ENCODE measurements at regions of chr6 and their contacts with region 1.

Region 1: GRCh38 chr6:28252009-28252975 is at the start of gene ZKSCAN4:
- DNase-seq: peak; percentile 57 to 67
- ATAC-seq: peak; percentile 99 to 100
- H3K4me3 ChIP-seq: peak within 1 kb of the TSS; percentile 72 to 94 (median 90)
- H3K27ac ChIP-seq: peak within 1 kb of the TSS; percentile 44 to 53 (median 49)
- H3K4me1 ChIP-seq: peaks cover 9 to 15% of the 10 kb centered on the region in 2 donors
- H3K27me3 ChIP-seq: peaks cover 0 to 3% (median 0%) of the 10 kb centered on the region in 3 donors
- CTCF ChIP-seq: no peak
- POLR2A ChIP-seq: no peak
- total RNA-seq, gene ZKSCAN4: 0.82 to 3.3 (median 1.1) TPM

Region 2: GRCh38 chr6:28225056-28225834 is 27.0 kb before region 1 on chr6 and contains the start of gene ZSCAN9:
- in situ Hi-C with region 1: no loop called
- intact Hi-C with region 1: loop called (anchors 2 kb)
- DNase-seq: peak; percentile 75 to 83
- ATAC-seq: peak; percentile 93 to 99
- H3K4me3 ChIP-seq: peak within 1 kb of the TSS; percentile 66 to 88 (median 86)
- H3K27ac ChIP-seq: peak within 1 kb of the TSS; percentile 63 to 80 (median 71)
- H3K4me1 ChIP-seq: peaks cover 13 to 16% of the 10 kb centered on the region in 2 donors
- H3K27me3 ChIP-seq: peaks cover 0 to 12% (median 6%) of the 10 kb centered on the region in 3 donors
- CTCF ChIP-seq: no peak
- POLR2A ChIP-seq: no peak
- total RNA-seq, gene ZSCAN9: 3.7 to 6.5 (median 4.3) TPM

Region 3: GRCh38 chr6:28335564-28336283 is 83.4 kb after region 1 on chr6 and contains the start of gene ZSCAN31:
- in situ Hi-C with region 1: no loop called
- intact Hi-C with region 1: loop called (anchors 5 kb)
- DNase-seq: peak; percentile 90 to 94
- ATAC-seq: peak; percentile 98 to 99
- H3K4me3 ChIP-seq: peak within 1 kb of the TSS; percentile 78 to 91 (median 84)
- H3K27ac ChIP-seq: peak within 1 kb of the TSS; percentile 90 to 99 (median 97)
- H3K4me1 ChIP-seq: peaks cover 11 to 13% of the 10 kb centered on the region in 2 donors
- H3K27me3 ChIP-seq: no peaks in the 10 kb centered on the region
- CTCF ChIP-seq: no peak
- POLR2A ChIP-seq: peak; percentile 64 to 78
- total RNA-seq, gene ZSCAN31: 2.4 to 14.1 (median 7.5) TPM

Region 4: GRCh38 chr6:28443112-28443773 is 191.0 kb after region 1 on chr6 and contains the start of gene ZSCAN23:
- in situ Hi-C with region 1: no loop called
- intact Hi-C with region 1: loop called (anchors 2 kb)
- DNase-seq: peak; percentile 3 to 16
- ATAC-seq: peak in 1 of 2 donors; percentile 36
- H3K4me3 ChIP-seq: peak within 1 kb of the TSS; percentile 46 to 67 (median 59)
- H3K27ac ChIP-seq: peak within 1 kb of the TSS in 1 of 4 donors; percentile 11
- H3K4me1 ChIP-seq: peaks cover 0 to 5% of the 10 kb centered on the region in 2 donors
- H3K27me3 ChIP-seq: peaks cover 17 to 30% (median 25%) of the 10 kb centered on the region in 3 donors
- CTCF ChIP-seq: no peak
- POLR2A ChIP-seq: no peak
- total RNA-seq, gene ZSCAN23: 0.25 to 0.62 TPM in 2 of 4 donors, not detected in the others